ENCODE measurements at regions of chr3 and their contacts with region 1.

Region 1: GRCh38 chr3:48151058-48151806 is 37.0 kb downstream of the CDC25A start:
- ATAC-seq: peak; percentile 98 to 100 (median 98)
- H3K4me3 ChIP-seq: no peak overlapping the region
- H3K27ac ChIP-seq: no peak overlapping the region
- H3K4me1 ChIP-seq: no peaks in the 10 kb centered on the region

Region 2: DNA sequence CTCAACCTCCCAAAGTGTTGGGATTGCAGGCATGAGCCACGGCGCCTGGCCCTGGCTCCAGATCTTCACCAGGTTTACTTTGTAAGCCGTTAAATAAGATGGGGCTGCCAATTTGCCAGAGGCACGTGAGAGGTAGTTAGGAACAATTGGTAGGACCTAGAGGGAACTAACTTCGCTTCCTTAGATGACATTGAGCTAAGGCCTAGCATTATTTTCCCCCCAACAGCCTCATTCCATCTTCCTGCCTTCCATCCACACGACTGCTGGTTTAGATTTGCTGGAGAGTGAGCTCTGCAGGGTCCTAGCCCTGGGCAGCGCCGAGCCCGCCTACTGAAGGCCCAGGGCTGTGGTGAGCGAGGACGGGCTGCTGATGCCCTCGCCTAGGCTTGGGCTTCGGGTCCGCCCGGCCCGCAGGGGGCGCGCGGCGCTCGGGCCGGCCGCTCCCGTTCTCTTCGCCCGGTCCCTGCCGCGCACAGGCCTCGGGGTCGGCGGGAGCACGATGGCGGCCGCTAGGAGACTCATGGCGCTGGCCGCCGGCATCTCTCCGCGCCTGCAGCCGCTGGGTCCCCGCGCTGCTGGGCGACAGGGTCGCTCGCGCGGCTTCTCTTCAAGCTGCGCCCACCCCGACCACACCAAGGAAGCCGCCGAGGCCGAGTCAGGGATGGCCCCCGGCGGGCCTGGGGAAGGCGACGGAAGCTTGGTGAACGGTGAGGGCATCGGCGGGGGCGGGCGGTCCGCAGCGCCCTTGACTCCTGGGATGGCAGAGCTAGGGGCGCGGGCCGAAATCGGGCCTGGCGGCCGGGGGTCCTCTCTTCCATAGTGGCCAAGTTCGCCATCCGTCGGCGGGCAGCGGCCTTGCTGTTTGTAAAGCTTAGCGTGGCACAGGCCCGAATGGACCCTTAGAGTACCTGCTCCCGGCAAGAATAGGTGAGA is 326.4 kb before region 1 on chr3:
- in situ Hi-C with region 1: loop called in 3 of 9 experiments (anchors 25 kb)
- ATAC-seq: peak; percentile 98 to 99 (median 99)
- H3K4me3 ChIP-seq: peak overlapping the region; percentile 63 to 91 (median 89)
- H3K27ac ChIP-seq: peak overlapping the region; percentile 64 to 83
- H3K4me1 ChIP-seq: peaks cover 9 to 14% of the 10 kb centered on the region in 2 donors

Region 3: DNA sequence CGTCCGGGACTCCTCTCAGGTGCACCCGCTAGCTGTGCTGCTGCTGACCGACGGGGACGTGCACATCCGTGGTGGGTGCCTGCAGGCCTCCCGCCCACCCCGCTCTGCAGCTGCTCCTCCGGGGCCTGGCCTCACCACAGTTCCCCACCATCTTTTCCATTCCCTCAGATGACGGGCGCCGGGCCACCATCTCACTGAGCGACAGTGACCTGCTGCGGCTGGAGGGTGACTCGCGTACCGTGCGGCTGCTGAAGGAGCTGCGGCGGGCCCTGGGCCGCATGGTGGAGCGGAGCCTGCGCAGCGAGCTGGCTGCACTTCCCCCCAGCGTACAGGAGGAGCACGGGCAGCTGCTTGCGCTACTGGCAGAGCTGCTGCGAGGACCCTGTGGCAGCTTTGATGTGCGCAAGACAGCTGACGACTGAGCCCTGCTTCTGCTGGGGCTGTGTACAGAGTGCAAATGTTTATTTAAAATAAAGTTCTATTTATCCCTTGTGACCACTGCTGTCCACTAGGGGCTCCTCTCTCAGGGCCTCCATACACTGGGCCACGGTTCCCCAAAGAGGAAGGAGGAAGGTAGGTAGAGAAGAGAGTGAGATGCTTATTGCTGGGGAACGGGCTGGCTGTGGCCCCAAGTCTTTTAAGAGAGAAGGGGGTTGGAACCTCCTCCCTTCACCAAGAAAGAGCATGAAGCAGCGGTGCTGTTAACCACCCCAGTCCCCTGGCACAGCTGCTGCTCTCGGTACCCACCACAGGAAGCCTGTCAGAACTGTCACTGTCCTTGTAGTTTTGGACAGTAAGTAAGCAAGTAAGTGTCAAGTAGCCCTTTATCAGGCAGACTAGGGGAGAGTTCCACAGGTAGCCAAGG is 301.3 kb before region 1 on chr3:
- in situ Hi-C with region 1: loop called in 5 of 9 experiments (anchors 10 to 25 kb)
- ATAC-seq: peak; percentile 36 to 58 (median 45)
- H3K4me3 ChIP-seq: no peak overlapping the region
- H3K27ac ChIP-seq: no peak overlapping the region
- H3K4me1 ChIP-seq: no peaks in the 10 kb centered on the region

Region 4: GRCh38 chr3:47989981-47990440 is 161.2 kb before region 1 on chr3:
- in situ Hi-C with region 1: loop called in 1 of 9 experiments (anchors 25 kb)
- ATAC-seq: peak; percentile 71 to 99 (median 92)
- H3K4me3 ChIP-seq: no peak overlapping the region
- H3K27ac ChIP-seq: no peak overlapping the region
- H3K4me1 ChIP-seq: no peaks in the 10 kb centered on the region

Measured in motor neuron (in vitro differentiated cells).